Activated CD4-positive, alpha-beta memory T cell treated with anti-CD3 and anti-CD28 coated beads for 36 hours (primary cell): ENCODE measurements at regions of chr16 and their contacts with region 1.

Region 1: DNA sequence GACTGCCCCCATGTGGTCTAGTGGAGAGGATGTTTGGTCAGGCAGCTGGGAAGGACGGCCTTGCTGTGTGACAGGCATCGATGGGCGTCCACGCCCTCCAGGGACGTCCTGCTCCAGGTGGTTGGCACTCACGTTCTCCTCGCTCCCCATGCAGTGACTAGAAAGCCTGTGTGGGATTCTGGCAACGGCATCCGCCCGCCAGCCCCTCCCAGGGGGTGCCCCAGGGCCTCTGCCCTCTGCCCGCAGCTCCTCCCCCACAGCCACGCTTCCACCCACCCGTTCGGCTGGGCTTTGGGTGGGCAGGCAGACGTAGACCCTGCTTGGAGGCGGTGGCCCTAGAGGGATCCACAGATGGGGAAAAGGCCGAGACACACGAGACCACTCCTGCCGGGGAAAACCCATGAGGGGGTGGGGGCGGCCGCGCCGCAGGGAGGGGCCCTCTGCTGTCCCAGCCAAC is 4.7 kb upstream of the IL17C start:
- DNase-seq: peak; percentile 78
- H3K4me3 Mint-ChIP-seq: peak overlapping the region; percentile 66
- H3K27ac Mint-ChIP-seq: peak overlapping the region; percentile 54
- H3K4me1 Mint-ChIP-seq: peaks cover 46% of the 10 kb centered on the region
- H3K27me3 Mint-ChIP-seq: peaks cover 17% of the 10 kb centered on the region

Region 2: GRCh38 chr16:88578446-88579313 is 55.0 kb before region 1 on chr16:
- CTCF ChIA-PET with region 1: no interaction called
- POLR2A ChIA-PET with region 1: no interaction called
- intact Hi-C with region 1: no loop called
- DNase-seq: no peak
- H3K4me3 Mint-ChIP-seq: no peak overlapping the region
- H3K27ac Mint-ChIP-seq: peak overlapping the region; percentile 45
- H3K4me1 Mint-ChIP-seq: peaks cover 37% of the 10 kb centered on the region
- H3K27me3 Mint-ChIP-seq: no peaks in the 10 kb centered on the region

Region 3: DNA sequence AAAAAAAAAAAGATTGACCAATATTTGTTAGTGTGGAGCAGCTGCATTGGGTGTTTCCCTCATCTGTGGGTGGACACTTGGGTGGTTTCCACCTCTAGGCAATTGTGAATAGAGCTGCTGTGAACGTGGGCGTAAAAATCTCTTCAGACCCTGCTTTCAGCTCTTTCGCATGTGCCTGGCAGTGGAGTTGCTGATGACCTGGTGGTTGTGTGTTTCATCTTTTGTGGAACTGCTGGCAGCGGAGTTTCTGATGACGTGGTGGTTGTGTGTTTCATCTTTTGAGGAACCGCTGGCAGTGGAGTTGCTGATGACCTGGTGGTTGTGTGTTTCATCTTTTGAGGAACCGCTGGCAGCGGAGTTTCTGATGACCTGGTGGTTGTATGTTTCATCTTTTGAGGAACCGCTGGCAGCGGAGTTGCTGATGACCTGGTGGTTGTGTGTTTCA is 42.1 kb before region 1 on chr16:
- CTCF ChIA-PET with region 1: interaction called, 3 read pairs
- POLR2A ChIA-PET with region 1: interaction called, 3 read pairs
- intact Hi-C with region 1: loop called (anchors 5 kb)
- DNase-seq: peak; percentile 82
- H3K4me3 Mint-ChIP-seq: no peak overlapping the region
- H3K27ac Mint-ChIP-seq: peak overlapping the region; percentile 79
- H3K4me1 Mint-ChIP-seq: peaks cover 49% of the 10 kb centered on the region
- H3K27me3 Mint-ChIP-seq: no peaks in the 10 kb centered on the region

Region 4: DNA sequence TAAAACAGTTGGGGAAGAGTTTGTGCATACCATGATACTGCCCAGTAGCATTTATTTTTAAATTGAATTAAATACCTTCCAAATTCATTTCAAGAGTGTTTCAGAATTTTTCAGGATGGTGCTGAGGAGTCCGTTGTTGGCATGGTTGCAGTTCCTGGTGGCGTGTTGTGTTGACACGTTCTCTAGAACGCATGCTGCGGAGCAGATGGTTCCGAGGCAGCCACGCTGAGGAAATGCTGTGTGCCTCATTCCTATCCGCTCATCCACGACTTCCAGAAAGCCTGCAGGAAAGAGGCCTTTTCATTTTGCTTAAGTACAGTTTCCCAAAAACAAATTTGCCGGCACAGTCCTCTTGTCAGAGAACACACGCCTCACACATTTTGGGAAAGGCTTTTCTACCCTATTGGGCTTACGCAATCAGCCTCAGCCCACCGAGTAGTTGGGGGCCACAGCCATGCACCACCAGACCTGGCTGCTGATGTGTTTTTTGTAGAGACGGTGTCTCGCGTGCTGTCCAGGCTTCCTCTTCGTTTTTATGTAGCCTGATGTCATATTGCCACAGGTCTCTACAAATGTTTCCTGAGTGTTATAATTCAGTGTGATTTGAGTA is 27.5 kb before region 1 on chr16:
- CTCF ChIA-PET with region 1: no interaction called
- POLR2A ChIA-PET with region 1: no interaction called
- intact Hi-C with region 1: no loop called
- DNase-seq: no peak
- H3K4me3 Mint-ChIP-seq: no peak overlapping the region
- H3K27ac Mint-ChIP-seq: no peak overlapping the region
- H3K4me1 Mint-ChIP-seq: no peaks in the 10 kb centered on the region
- H3K27me3 Mint-ChIP-seq: no peaks in the 10 kb centered on the region

Region 5: DNA sequence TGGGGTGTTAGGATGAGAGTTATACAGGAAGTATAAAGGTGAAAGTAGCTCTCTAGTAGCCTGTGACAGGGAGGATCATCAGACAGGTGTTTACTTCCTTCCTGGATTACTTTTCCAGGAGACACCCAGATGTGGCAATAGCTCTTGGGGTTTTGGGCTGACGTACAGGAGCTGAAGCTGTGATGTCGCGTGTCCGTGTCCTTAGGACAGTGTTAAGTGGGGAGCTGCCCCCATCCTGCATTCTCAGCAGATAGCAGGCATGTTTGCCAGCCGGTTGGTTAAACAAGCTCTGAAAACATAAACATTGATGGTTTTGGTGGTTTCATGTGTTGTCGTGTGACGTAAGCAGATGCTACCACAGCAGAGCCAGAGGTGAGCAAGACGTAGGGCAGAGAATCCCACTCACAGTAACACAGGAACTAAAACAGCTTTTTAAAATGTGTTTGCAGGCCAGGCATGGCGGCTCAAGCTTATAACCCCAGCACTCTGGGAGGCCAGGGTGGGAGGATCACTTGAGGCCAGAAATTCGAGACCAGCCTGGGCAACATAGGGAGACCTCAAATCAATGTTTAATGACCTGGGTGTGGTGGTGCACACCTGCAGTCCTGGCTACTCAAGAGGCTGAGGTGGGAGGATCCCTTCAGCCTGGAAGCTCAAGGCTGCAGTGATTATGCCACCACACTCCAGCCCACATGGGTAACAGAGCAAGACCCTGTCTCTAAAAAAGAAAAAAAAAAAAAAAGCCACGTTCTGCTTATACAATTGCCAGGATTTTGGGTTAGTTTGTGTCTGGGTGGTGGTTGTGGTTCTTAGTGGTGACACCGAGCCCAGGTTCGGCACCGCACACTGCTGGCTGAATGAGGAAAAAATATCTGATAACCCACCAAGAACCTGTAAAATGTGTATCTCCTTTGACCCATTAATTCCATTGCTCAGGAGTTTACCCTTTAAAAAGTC is 13.6 kb before region 1 on chr16:
- CTCF ChIA-PET with region 1: interaction called, 14 read pairs
- POLR2A ChIA-PET with region 1: interaction called, 4 read pairs
- intact Hi-C with region 1: no loop called
- DNase-seq: peak; percentile 79
- H3K4me3 Mint-ChIP-seq: peak overlapping the region; percentile 26
- H3K27ac Mint-ChIP-seq: peak overlapping the region; percentile 82
- H3K4me1 Mint-ChIP-seq: peaks cover 34% of the 10 kb centered on the region
- H3K27me3 Mint-ChIP-seq: no peaks in the 10 kb centered on the region